ENCODE measurements at regions of chr12 and their contacts with region 1.

Region 1: GRCh38 chr12:7806863-7807487 is 17.8 kb downstream of the NANOG start:
- DNase-seq: peak; percentile 81
- H3K4me3 ChIP-seq: no peak overlapping the region
- H3K27ac ChIP-seq: no peak overlapping the region
- H3K4me1 ChIP-seq: no peaks in the 10 kb centered on the region
- H3K27me3 ChIP-seq: no peaks in the 10 kb centered on the region
- CTCF ChIP-seq: peak; percentile 97

Region 2: DNA sequence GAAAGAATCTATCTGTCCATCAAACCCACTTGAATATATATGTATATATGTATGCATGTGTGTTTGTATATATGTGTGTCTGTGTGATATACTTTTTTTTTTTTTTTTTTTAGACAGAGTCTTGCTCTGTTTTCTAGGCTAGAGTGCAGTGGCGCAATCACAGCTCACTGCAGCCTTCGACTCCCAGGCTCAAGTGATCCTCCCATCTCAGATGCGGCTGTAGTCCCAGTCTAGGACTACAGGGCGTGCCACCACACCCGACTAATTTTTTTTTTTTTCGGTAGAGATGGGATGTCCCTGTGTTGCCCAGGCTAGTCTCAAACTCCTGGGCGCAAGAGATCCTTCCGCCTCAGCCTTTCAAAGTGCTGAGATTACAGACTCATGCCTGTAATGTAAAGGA is 128.2 kb before region 1 on chr12:
- CTCF ChIA-PET with region 1: interaction called, 6 read pairs
- POLR2A ChIA-PET with region 1: no interaction called
- intact Hi-C with region 1: loop called (anchors 1 kb)
- DNase-seq: peak; percentile 18
- H3K4me3 ChIP-seq: no peak overlapping the region
- H3K27ac ChIP-seq: no peak overlapping the region
- H3K4me1 ChIP-seq: no peaks in the 10 kb centered on the region
- H3K27me3 ChIP-seq: no peaks in the 10 kb centered on the region
- CTCF ChIP-seq: no peak

Region 3: DNA sequence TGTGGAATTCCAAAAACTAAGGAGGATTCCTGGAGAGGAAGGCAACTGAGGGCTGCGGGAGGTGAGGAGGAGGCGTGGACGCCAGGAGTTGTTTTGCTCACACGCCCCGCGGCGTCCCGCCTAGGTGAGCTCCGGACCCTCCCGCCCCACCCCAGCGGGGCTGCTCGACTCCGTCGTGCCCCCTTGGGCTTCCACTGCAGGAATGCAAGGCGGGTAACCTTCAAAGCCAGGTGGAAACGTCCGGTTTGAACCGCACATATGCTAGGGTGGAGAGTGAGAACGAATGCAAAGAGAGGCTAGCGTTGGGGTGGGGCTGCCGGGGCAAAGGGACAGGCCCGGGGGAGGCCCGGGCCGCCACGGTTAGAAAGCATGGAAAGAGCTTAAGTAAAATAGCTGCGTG is 101.1 kb before region 1 on chr12:
- CTCF ChIA-PET with region 1: interaction called, 14 read pairs
- POLR2A ChIA-PET with region 1: no interaction called
- intact Hi-C with region 1: no loop called
- DNase-seq: no peak
- H3K4me3 ChIP-seq: no peak overlapping the region
- H3K27ac ChIP-seq: no peak overlapping the region
- H3K4me1 ChIP-seq: no peaks in the 10 kb centered on the region
- H3K27me3 ChIP-seq: no peaks in the 10 kb centered on the region
- CTCF ChIP-seq: no peak

Region 4: DNA sequence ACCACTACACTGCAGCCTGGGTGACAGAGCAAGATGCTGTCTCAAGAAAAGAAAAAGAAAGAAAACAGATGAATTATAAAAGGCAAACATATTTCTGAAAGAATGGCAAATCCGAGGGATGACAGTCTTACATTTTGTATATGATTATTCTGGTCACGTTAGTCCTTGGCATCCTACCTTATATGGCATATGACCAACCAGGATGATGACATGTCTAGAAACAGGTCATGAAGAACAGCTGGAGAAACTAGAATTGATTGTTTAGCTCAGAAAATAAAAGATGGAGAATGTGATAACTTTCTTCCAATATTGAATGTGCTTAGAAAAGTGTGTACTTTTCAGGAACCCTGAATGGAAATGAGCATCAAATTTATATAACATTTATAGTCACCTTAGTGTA is 46.6 kb after region 1 on chr12:
- CTCF ChIA-PET with region 1: no interaction called
- POLR2A ChIA-PET with region 1: no interaction called
- intact Hi-C with region 1: no loop called
- DNase-seq: no peak
- H3K4me3 ChIP-seq: no peak overlapping the region
- H3K27ac ChIP-seq: no peak overlapping the region
- H3K4me1 ChIP-seq: no peaks in the 10 kb centered on the region
- H3K27me3 ChIP-seq: peaks cover 15% of the 10 kb centered on the region
- CTCF ChIP-seq: no peak

Region 5: DNA sequence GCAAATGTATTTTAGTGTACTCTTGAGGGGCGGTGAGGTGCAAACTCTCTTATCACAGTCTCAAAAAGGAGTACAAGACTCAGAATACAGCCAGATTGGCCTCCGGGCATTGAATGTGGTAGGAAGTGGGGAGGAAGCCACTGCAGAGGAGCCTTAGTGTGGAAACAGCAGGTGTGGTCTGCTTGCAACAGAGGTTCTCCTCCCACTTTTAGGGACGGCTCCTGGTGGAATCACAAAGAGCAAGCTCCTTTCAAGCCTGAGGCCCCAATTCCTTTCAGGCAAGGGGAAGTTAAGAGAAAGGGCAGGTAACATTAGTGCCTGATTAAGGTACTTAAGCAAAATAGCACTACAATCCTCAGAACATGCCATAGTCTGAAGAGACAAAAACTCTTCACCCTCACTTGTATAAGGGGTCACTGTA is 152.7 kb after region 1 on chr12:
- CTCF ChIA-PET with region 1: no interaction called
- POLR2A ChIA-PET with region 1: no interaction called
- intact Hi-C with region 1: no loop called
- DNase-seq: peak; percentile 19
- H3K4me3 ChIP-seq: no peak overlapping the region
- H3K27ac ChIP-seq: peak overlapping the region; percentile 38
- H3K4me1 ChIP-seq: peaks cover 22% of the 10 kb centered on the region
- H3K27me3 ChIP-seq: no peaks in the 10 kb centered on the region
- CTCF ChIP-seq: no peak